CD8-positive, alpha-beta T cell (primary cell): ENCODE measurements at regions of chr17 and their contacts with region 1.

Region 1: GRCh38 chr17:46154151-46154816 is 38.9 kb downstream of the KANSL1 start:
- DNase-seq: peak in 4 of 9 experiments; percentile 28 to 52 (median 34)
- ATAC-seq: peak; percentile 64
- H3K4me3 ChIP-seq: no peak overlapping the region
- H3K4me3 Mint-ChIP-seq: peak overlapping the region; percentile 62
- H3K27ac ChIP-seq: peak overlapping the region in 1 of 2 experiments; percentile 49
- H3K27ac Mint-ChIP-seq: peak overlapping the region; percentile 83
- H3K4me1 ChIP-seq: peaks cover 93% of the 10 kb centered on the region
- H3K4me1 Mint-ChIP-seq: peaks cover 90% of the 10 kb centered on the region
- H3K27me3 ChIP-seq: no peaks in the 10 kb centered on the region
- H3K27me3 Mint-ChIP-seq: no peaks in the 10 kb centered on the region
- CTCF ChIP-seq: no peak

Region 2: DNA sequence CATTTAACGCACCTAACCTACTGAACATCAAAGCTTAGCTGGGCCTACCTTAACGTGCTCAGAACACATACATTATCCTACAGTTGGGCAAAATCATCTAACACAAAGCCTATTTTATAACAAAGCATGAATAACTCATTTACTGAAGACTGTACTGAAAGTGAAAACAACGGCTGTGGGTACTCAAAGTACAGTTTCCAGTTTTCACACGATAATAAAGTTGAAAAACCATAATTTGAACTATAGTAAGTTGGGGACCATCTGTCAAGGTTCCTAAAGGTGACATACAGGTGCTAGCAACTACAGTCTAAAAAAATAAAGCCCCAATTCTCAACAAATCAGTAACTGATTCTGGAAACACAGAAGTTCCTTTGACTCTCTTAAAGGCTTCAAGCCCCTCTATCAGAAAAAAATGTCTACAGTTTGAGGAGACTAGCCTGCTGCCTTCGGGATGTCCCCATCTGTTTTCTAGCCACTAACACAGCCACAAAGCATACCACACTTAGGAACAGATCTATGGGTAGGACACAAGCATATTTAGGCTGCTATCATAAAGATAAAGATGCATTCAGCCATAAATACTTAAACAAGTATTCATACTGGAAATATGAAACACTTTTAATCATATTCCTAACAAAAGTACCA is 32.3 kb before region 1 on chr17:
- CTCF ChIA-PET with region 1: no interaction called
- POLR2A ChIA-PET with region 1: interaction called, 3 read pairs
- intact Hi-C with region 1: loop called in 1 of 2 experiments (anchors 5 kb)
- DNase-seq: peak in 1 of 9 experiments; percentile 46
- ATAC-seq: peak; percentile 27
- H3K4me3 ChIP-seq: no peak overlapping the region
- H3K4me3 Mint-ChIP-seq: peak overlapping the region; percentile 44
- H3K27ac ChIP-seq: peak overlapping the region in 1 of 2 experiments; percentile 47
- H3K27ac Mint-ChIP-seq: peak overlapping the region; percentile 87
- H3K4me1 ChIP-seq: peaks cover 74% of the 10 kb centered on the region
- H3K4me1 Mint-ChIP-seq: peaks cover 85% of the 10 kb centered on the region
- H3K27me3 ChIP-seq: no peaks in the 10 kb centered on the region
- H3K27me3 Mint-ChIP-seq: no peaks in the 10 kb centered on the region
- CTCF ChIP-seq: no peak

Region 3: DNA sequence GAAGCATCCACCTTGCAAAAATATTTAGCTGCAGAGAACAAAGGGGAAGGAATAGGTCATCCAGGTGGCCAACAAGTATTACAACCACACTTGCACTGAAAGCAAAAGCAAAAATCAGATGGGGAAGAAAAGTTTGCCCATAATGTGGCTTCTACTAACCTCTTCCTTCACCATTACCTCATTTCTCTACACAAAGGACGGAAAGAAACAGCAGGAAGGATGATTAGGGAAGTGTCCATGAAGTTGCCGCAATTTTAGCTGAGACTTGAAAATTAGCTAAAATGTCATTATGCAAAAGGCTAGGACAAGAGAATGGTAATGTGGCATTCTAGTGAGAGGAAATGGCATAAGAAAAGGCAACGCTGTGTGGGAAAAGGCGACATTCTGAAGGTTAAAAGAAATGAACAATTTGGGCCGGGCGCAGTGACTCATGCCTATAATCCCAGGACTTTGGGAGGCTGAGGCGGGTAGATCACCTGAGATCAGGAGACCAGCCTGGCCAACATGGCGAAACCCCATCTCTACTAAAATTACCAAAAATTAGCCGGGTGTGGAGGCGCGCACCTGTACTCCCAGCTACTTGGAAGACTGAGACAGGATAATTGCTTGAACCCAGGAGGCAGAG is 25.2 kb after region 1 on chr17:
- CTCF ChIA-PET with region 1: interaction called, 3 read pairs
- POLR2A ChIA-PET with region 1: interaction called, 6 read pairs
- intact Hi-C with region 1: loop called in 1 of 2 experiments (anchors 2 kb)
- DNase-seq: peak in 1 of 9 experiments; percentile 40
- ATAC-seq: no peak
- H3K4me3 ChIP-seq: no peak overlapping the region
- H3K4me3 Mint-ChIP-seq: peak overlapping the region; percentile 46
- H3K27ac ChIP-seq: no peak overlapping the region
- H3K27ac Mint-ChIP-seq: peak overlapping the region; percentile 70
- H3K4me1 ChIP-seq: peaks cover 84% of the 10 kb centered on the region
- H3K4me1 Mint-ChIP-seq: peaks cover 94% of the 10 kb centered on the region
- H3K27me3 ChIP-seq: no peaks in the 10 kb centered on the region
- H3K27me3 Mint-ChIP-seq: no peaks in the 10 kb centered on the region
- CTCF ChIP-seq: no peak